ENCODE measurements at regions of chr17 and their contacts with region 1.

Region 1: GRCh38 chr17:1648963-1649843 is 463 bp downstream of the RILP start:
- DNase-seq: peak; percentile 92 to 95 (median 93)
- H3K4me3 ChIP-seq: peak overlapping the region in 1 of 2 donors; percentile 63
- H3K4me3 Mint-ChIP-seq: peak overlapping the region; percentile 24 to 78 (median 68)
- H3K27ac ChIP-seq: peak overlapping the region; percentile 53
- H3K27ac Mint-ChIP-seq: peak overlapping the region in 3 of 7 donors; percentile 35 to 90 (median 53)
- H3K4me1 ChIP-seq: peaks cover 23% of the 10 kb centered on the region
- H3K4me1 Mint-ChIP-seq: peaks cover 6 to 20% (median 12%) of the 10 kb centered on the region in 4 donors
- H3K27me3 ChIP-seq: no peaks in the 10 kb centered on the region
- H3K27me3 Mint-ChIP-seq: no peaks in the 10 kb centered on the region

Region 2: GRCh38 chr17:1365445-1366039 is 283.7 kb before region 1 on chr17:
- CTCF ChIA-PET with region 1: interaction called, 4 read pairs
- POLR2A ChIA-PET with region 1: no interaction called
- intact Hi-C with region 1: loop called (anchors 5 kb)
- DNase-seq: peak; percentile 74 to 80 (median 78)
- H3K4me3 ChIP-seq: no peak overlapping the region
- H3K4me3 Mint-ChIP-seq: peak overlapping the region in 3 of 8 donors; percentile 21 to 31 (median 26)
- H3K27ac ChIP-seq: peak overlapping the region; percentile 23
- H3K27ac Mint-ChIP-seq: peak overlapping the region; percentile 57 to 89 (median 76)
- H3K4me1 ChIP-seq: peaks cover 77% of the 10 kb centered on the region
- H3K4me1 Mint-ChIP-seq: peaks cover 40 to 79% (median 53%) of the 10 kb centered on the region in 4 donors
- H3K27me3 ChIP-seq: no peaks in the 10 kb centered on the region
- H3K27me3 Mint-ChIP-seq: no peaks in the 10 kb centered on the region

Region 3: DNA sequence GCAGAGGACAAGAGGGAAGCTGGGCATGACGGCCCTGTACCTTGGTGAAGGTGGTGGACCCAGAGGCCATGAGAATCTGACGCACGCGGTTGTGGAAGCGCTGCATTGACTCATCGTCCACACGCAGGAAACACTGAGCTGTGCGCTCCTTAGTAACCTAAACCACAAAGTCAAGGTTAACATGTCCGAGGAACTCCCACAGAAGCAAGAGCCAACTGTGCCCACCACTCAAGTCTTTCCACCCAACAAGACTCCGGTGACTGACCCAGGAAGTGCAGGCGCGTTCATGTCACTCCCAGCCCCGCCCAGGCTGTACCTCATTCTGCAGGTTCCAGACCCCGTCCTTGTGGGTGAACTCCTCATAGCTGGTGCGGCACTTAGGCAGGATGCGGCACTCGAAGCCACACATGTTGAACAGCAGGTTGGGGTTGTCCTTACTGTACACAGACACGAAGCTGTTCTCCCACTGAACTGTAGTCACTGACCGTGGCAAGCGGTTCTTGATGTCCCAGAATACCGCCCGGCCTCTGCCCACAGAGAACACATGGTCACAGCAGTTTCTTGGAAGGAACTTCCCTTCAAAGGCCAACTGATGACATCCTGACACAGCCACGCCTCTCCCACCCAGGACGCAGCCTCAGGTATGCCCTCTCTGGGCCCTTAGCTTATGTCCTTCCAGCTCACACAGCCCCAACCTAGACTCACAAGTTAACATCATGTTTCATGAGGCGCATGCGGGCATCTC is 24.0 kb after region 1 on chr17:
- CTCF ChIA-PET with region 1: interaction called, 16 read pairs
- POLR2A ChIA-PET with region 1: interaction called, 8 read pairs
- intact Hi-C with region 1: no loop called
- DNase-seq: peak; percentile 21 to 71 (median 42)
- H3K4me3 ChIP-seq: no peak overlapping the region
- H3K4me3 Mint-ChIP-seq: peak overlapping the region in 2 of 8 donors; percentile 13 to 21
- H3K27ac ChIP-seq: peak overlapping the region; percentile 4
- H3K27ac Mint-ChIP-seq: peak overlapping the region in 6 of 7 donors; percentile 37 to 74 (median 62)
- H3K4me1 ChIP-seq: no peaks in the 10 kb centered on the region
- H3K4me1 Mint-ChIP-seq: peaks cover 18 to 37% (median 29%) of the 10 kb centered on the region in 4 donors
- H3K27me3 ChIP-seq: no peaks in the 10 kb centered on the region
- H3K27me3 Mint-ChIP-seq: no peaks in the 10 kb centered on the region

Region 4: DNA sequence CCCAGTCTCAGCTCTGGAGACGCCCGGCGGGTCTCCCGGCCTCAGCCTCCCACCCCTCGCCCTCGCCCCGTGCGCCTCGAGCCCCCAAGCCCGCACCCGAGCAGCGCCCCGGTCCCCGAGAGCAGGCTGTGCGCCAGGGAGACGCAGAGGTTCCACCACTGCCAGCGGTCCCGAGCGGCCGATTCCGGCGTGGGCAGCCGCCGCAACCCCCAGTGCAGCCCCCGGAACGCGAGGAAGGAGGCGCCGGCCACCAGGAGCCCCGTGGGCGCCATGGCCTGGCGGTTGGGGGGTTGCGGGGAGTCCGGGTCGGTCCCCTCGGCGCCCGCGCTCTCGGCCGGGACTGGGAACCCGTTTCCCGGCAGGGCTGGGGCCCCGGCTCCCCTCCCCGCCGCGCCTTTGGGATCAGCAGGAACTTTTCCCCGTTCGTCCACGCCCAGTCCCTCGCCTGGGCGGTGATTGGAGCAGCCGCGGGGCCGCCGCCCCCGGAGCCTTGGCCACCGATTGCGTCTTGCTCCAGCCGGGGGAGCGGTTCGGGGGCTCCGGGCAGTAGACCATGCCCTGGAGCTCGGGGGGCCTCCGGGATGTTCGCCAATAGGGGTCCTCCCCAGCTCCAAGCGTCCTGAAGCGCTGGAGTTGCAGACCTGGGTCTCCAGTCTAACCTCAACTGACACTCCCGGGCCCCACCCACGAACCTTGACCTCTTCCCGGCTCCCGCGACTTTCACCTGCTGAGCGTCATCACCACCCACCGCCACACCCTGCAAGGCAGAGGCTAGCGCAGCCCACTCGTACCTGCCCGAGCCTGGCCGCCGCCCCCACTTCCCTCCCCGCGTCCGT is 61.0 kb after region 1 on chr17 and contains the start of gene TLCD2:
- CTCF ChIA-PET with region 1: no interaction called
- POLR2A ChIA-PET with region 1: no interaction called
- intact Hi-C with region 1: no loop called
- DNase-seq: no peak
- H3K4me3 ChIP-seq: peak within 1 kb of the TSS; percentile 17 to 51
- H3K4me3 Mint-ChIP-seq: peak within 1 kb of the TSS; percentile 74 to 86 (median 80)
- H3K27ac ChIP-seq: peak within 1 kb of the TSS; percentile 36
- H3K27ac Mint-ChIP-seq: peak within 1 kb of the TSS; percentile 61 to 91 (median 78)
- H3K4me1 ChIP-seq: peaks cover 32% of the 10 kb centered on the region
- H3K4me1 Mint-ChIP-seq: peaks cover 12 to 49% (median 30%) of the 10 kb centered on the region in 4 donors
- H3K27me3 ChIP-seq: no peaks in the 10 kb centered on the region
- H3K27me3 Mint-ChIP-seq: peaks cover 0 to 2% of the 10 kb centered on the region in 2 donors
- total RNA-seq, gene TLCD2: 0.75 to 0.81 TPM

Region 5: GRCh38 chr17:1764284-1764683 is 115.1 kb after region 1 on chr17:
- CTCF ChIA-PET with region 1: interaction called, 3 read pairs
- POLR2A ChIA-PET with region 1: interaction called, 11 read pairs
- intact Hi-C with region 1: no loop called
- DNase-seq: peak; percentile 43 to 83 (median 76)
- H3K4me3 ChIP-seq: no peak overlapping the region
- H3K4me3 Mint-ChIP-seq: peak overlapping the region; percentile 40 to 86 (median 66)
- H3K27ac ChIP-seq: peak overlapping the region; percentile 43
- H3K27ac Mint-ChIP-seq: peak overlapping the region; percentile 51 to 97 (median 92)
- H3K4me1 ChIP-seq: peaks cover 34% of the 10 kb centered on the region
- H3K4me1 Mint-ChIP-seq: peaks cover 17 to 49% (median 22%) of the 10 kb centered on the region in 4 donors
- H3K27me3 ChIP-seq: no peaks in the 10 kb centered on the region
- H3K27me3 Mint-ChIP-seq: no peaks in the 10 kb centered on the region

Region 6: DNA sequence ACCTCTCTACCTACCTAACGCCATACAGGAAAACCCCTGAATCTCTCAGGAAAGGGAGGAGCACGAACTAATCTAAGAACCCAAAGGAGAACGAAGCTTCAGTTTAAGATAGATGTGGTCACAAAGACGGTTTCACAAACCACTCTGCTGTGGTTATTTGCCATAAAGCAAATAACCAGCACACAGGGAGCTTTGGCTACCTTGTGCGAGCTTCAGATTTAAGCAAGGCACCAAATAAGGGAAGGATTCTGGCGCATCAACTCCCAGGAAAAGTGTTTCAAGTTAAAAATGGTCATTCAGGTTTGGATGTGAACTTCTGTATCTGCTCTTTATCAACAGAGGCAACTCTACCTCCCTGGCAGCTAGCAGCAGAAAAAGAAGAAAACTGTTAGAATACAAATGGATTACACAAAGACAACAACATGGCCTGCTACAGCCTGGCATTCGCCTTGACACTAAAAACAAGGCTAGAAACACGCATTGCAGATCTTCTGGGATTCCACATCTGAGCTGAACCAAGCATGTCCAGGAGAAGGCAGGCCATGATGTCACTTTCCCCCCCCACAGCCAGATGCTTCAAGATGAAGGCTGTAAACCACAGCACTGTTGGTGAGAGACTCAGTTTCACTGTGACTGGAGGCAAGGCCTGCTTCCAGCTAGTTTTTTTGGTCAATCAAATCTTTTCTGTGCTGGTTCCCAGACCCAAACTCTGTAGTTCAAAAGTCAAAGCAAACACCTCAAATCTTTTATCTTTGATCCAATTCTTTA is 610.8 kb after region 1 on chr17:
- CTCF ChIA-PET with region 1: no interaction called
- POLR2A ChIA-PET with region 1: interaction called, 3 read pairs
- intact Hi-C with region 1: loop called (anchors 10 kb)
- DNase-seq: peak; percentile 53 to 82 (median 57)
- H3K4me3 ChIP-seq: peak overlapping the region; percentile 13 to 31
- H3K4me3 Mint-ChIP-seq: peak overlapping the region; percentile 58 to 82 (median 76)
- H3K27ac ChIP-seq: peak overlapping the region; percentile 65
- H3K27ac Mint-ChIP-seq: peak overlapping the region; percentile 85 to 98 (median 96)
- H3K4me1 ChIP-seq: peaks cover 69% of the 10 kb centered on the region
- H3K4me1 Mint-ChIP-seq: peaks cover 43 to 74% (median 61%) of the 10 kb centered on the region in 4 donors
- H3K27me3 ChIP-seq: no peaks in the 10 kb centered on the region
- H3K27me3 Mint-ChIP-seq: no peaks in the 10 kb centered on the region